ENCODE measurements at regions of chr6 and their contacts with region 1.

Region 1: DNA sequence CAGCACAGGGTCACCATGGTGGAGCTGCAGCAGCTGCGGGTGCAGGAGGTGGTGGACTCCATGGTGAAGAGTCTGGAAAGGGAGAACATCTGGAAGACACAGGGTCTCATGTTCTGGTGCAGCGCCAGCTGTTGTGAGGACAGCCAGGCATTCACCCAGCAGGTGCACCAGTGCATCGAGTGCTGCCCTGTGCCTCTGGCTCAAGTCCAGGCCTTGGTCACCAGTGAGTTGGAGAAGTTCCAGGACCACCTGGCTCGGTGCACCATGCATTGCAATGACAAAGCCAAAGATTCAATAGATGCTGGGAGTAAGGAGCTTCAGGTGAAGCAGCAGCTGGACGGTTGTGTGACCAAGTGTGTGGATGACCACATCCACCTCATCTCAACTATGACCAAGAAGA is 22.9 kb upstream of the RIPK1 start:
- DNase-seq: no peak
- ATAC-seq: no peak

Region 2: GRCh38 chr6:3013479-3013878 is 31.9 kb before region 1 on chr6:
- intact Hi-C with region 1: loop called in 1 of 2 experiments (anchors 5 kb)
- DNase-seq: no peak
- ATAC-seq: peak; percentile 63